ENCODE measurements at regions of chr11 and their contacts with region 1.

Region 1: DNA sequence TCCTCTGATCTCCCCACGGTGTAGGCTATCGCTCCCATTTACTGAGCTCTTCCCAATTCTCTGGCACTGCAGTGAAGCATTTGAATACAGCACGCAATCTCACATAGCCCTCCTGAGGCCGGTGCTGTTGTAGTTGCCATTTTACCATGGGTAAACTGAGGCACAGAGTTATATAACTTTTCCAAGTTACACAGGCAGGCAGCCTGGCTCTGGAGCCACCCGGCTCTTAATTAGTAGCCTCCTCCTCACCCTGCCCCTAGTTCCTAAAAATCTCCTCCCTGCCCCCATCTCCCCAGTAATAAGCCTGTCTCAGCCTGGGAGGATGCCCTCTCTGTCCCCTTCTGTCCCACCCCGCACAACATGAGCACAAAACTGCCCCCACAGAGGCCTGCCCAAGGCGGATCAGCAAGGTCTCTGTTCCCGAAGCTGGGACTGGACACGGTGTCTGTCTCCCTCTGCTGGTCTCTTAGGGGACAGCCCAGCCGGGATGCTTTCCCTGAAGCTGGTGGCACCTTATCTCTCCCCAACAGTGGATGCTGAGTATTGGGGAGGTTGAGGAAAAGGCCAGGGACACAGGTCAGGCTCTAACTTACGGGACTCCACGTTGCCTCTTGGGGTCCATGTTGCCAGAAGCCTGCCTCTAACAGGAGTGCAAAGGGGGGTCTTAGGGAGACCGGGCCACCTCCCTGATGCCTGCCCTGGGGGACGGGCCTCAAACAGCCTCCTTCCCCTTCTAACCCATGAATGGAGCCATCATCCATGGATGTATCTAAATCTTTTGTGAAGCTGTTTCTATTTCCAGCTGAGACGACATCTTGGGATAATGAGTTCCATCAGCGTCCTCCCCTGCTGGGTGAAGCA is 9.1 kb upstream of the CLCF1 start:
- DNase-seq: peak; percentile 94
- H3K4me3 ChIP-seq: no peak overlapping the region
- H3K27ac ChIP-seq: peak overlapping the region in 3 of 8 donors; percentile 12 to 87 (median 82)
- H3K4me1 ChIP-seq: peaks cover 8 to 49% (median 25%) of the 10 kb centered on the region in 6 donors
- H3K27me3 ChIP-seq: no peaks in the 10 kb centered on the region
- CTCF ChIP-seq: peak; percentile 95 to 98 (median 97)
- POLR2A ChIP-seq: no peak

Region 2: GRCh38 chr11:67252831-67253239 is 129.7 kb before region 1 on chr11:
- intact Hi-C with region 1: loop called (anchors 10 kb)
- DNase-seq: no peak
- H3K4me3 ChIP-seq: no peak overlapping the region
- H3K27ac ChIP-seq: peak overlapping the region in 4 of 8 donors; percentile 24 to 64 (median 46)
- H3K4me1 ChIP-seq: peaks cover 0 to 85% (median 23%) of the 10 kb centered on the region in 6 donors
- H3K27me3 ChIP-seq: no peaks in the 10 kb centered on the region
- CTCF ChIP-seq: peak in 5 of 11 experiments; percentile 29 to 47 (median 32)
- POLR2A ChIP-seq: no peak

Region 3: GRCh38 chr11:67345920-67346799 is 36.3 kb before region 1 on chr11:
- intact Hi-C with region 1: loop called (anchors 5 kb)
- DNase-seq: no peak
- H3K4me3 ChIP-seq: no peak overlapping the region
- H3K27ac ChIP-seq: peak overlapping the region in 7 of 8 donors; percentile 19 to 79 (median 68)
- H3K4me1 ChIP-seq: peaks cover 46 to 86% (median 64%) of the 10 kb centered on the region in 6 donors
- H3K27me3 ChIP-seq: no peaks in the 10 kb centered on the region
- CTCF ChIP-seq: peak; percentile 24 to 67 (median 52)
- POLR2A ChIP-seq: no peak